ENCODE measurements at regions of chr18 and their contacts with region 1.

Region 1: GRCh38 chr18:63320046-63320689 is 599 bp upstream of the BCL2 start:
- DNase-seq: no peak
- H3K4me3 ChIP-seq: peak overlapping the region; percentile 63 to 84
- H3K27ac ChIP-seq: peak overlapping the region; percentile 93
- H3K4me1 ChIP-seq: peaks cover 29% of the 10 kb centered on the region
- H3K27me3 ChIP-seq: no peaks in the 10 kb centered on the region
- CTCF ChIP-seq: no peak
- POLR2A ChIP-seq: no peak

Region 2: DNA sequence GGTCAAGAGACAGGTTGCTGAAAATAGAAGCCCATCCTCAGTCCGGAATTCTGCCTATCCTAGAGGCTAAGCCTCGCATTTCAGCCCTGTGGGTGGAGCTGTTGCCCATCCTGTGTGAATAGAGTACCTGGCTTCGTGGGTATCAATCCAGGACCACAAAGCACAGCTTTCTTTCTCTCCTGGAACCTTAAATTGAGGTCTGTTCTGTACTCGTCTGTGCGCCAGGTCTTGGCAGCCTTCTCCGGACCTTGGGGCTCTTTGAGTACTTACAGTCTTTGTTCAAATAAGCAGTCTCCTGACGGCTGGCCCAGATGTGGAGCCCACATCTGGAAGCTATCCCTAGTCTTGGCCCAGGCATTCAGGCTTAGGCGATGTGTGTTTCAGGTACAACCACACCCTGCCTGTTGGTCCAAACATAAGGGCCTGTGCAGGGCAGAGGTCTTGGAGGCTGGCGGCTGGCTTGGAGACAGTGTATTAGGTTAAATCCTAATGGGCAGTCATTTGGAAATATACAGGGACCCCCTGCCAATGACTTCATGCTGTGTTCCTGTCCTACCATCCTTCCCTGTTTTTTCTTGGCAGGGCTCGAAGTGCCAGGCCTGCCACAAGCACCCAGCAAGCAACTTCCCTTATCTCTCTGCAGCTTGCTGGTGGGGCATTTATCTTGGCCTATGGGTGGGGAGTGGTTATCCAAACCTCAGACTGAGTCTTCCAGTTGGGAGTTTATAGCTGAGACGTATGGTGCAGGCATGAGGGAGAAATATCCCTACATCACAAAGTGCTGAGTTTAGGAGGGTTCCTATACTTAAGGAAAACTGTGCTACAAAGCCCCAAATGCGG is 294.7 kb before region 1 on chr18:
- intact Hi-C with region 1: loop called (anchors 5 kb)
- DNase-seq: no peak
- H3K4me3 ChIP-seq: no peak overlapping the region
- H3K27ac ChIP-seq: no peak overlapping the region
- H3K4me1 ChIP-seq: no peaks in the 10 kb centered on the region
- H3K27me3 ChIP-seq: no peaks in the 10 kb centered on the region
- CTCF ChIP-seq: no peak
- POLR2A ChIP-seq: no peak

Region 3: DNA sequence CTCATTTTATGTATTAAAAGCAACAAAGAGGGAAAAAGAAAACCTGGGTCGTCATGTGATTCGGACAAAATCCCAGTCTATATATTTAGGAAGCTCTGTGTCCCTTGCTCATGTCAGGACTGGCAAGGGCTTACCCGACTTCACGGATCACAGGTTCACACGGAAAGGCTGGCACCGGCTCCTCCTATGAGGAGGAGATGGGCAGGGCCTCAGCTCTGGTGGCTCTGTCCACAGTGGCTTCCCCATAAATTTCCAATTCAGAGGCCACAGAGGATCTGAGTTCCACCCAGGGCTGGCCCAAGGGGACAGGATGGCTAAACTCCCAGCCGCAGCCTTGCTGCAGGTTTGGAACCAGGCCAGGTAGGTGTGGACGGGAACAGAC is 187.4 kb before region 1 on chr18:
- intact Hi-C with region 1: loop called (anchors 2 kb)
- DNase-seq: no peak
- H3K4me3 ChIP-seq: peak overlapping the region in 1 of 2 donors; percentile 19
- H3K27ac ChIP-seq: peak overlapping the region; percentile 7
- H3K4me1 ChIP-seq: peaks cover 23% of the 10 kb centered on the region
- H3K27me3 ChIP-seq: no peaks in the 10 kb centered on the region
- CTCF ChIP-seq: no peak
- POLR2A ChIP-seq: no peak

Region 4: GRCh38 chr18:63237881-63238667 is 82.1 kb before region 1 on chr18:
- intact Hi-C with region 1: loop called (anchors 5 kb)
- DNase-seq: no peak
- H3K4me3 ChIP-seq: peak overlapping the region; percentile 10 to 21
- H3K27ac ChIP-seq: peak overlapping the region; percentile 90
- H3K4me1 ChIP-seq: peaks cover 47% of the 10 kb centered on the region
- H3K27me3 ChIP-seq: no peaks in the 10 kb centered on the region
- CTCF ChIP-seq: no peak
- POLR2A ChIP-seq: no peak

Region 5: DNA sequence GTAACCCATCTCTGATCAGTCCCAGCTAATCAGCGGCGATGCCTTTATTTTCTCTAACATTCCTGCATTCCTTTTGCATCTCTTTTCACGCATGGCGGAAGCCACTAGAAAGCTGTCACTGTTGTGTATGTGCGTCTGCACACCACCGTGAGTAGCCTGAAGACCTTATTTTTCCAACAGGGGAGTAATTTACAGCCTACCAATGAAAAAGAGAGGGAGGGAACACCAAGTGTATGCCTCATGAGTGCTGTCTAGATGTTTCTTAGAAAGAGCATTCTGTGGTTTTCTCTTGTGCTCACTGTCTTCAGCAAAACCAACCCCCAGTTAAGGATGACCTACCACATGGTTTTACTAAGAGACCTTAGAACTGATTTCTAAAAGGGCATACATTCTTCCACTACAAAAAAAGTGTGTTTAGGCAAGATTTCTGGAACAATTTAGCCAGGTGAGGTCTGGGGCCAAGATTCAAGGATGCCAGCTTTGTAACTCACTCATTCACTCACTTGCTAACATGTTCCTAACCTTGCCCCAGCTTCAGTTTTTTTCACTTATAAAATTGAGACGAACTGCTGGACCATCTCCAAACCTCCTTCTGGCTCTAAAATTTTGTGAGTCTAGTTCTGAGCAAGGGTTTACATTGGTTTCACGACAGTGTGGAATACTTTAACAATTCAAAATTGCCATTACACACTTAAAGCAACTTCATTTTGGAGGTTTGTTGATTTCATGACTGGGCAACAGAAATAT is 52.0 kb before region 1 on chr18:
- intact Hi-C with region 1: loop called (anchors 10 kb)
- DNase-seq: no peak
- H3K4me3 ChIP-seq: no peak overlapping the region
- H3K27ac ChIP-seq: no peak overlapping the region
- H3K4me1 ChIP-seq: peaks cover 62% of the 10 kb centered on the region
- H3K27me3 ChIP-seq: no peaks in the 10 kb centered on the region
- CTCF ChIP-seq: no peak
- POLR2A ChIP-seq: no peak

Measured in vagina (tissue), 2 donors.